Posterior vena cava (tissue), 2 donors: ENCODE measurements at regions of chr5 and their contacts with region 1.

Region 1: DNA sequence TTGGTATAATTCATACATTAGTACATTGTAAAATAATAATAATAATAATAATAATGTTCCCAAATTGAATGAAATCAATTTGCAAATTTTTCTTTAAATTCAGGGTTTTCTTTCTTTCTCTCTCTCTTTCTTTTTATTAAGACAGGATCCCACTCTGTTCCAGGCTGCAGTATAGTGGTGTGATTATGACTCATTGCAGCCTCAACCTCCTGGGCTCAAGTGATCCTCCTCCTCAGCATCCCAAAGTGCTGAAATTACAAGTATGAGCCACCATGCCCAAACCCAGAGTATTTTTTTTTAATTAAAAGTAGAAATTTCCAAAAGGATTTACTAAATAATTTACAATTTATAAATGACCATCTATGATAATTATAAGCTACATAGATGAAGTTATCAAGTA is 117.7 kb downstream of the HOMER1 start:
- DNase-seq: no peak

Region 2: DNA sequence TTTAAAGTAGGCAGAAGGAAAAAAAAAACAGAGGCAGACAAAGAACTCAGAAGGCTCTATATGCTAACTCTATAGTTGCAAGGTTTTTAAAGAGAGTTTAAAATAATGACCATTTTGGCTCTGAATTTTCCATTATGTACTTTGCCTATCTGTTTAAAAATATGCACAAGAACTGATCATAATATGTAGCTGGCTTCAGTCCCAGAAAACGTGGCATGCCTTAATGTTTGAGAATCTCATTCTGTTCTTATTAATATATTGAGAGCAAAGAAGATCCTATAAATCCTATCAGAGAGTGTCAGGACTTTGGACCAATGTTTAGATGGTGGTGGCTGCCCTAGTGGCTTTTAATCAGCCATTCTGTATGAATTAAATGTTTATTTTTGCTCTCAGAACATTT is 38.9 kb before region 1 on chr5:
- intact Hi-C with region 1: no loop called
- DNase-seq: no peak

Region 3: GRCh38 chr5:79436224-79436623 is 40.0 kb after region 1 on chr5:
- intact Hi-C with region 1: loop called in 1 of 2 experiments (anchors 2 kb)
- DNase-seq: no peak